ENCODE measurements at regions of chr6 and their contacts with region 1.

Region 1: DNA sequence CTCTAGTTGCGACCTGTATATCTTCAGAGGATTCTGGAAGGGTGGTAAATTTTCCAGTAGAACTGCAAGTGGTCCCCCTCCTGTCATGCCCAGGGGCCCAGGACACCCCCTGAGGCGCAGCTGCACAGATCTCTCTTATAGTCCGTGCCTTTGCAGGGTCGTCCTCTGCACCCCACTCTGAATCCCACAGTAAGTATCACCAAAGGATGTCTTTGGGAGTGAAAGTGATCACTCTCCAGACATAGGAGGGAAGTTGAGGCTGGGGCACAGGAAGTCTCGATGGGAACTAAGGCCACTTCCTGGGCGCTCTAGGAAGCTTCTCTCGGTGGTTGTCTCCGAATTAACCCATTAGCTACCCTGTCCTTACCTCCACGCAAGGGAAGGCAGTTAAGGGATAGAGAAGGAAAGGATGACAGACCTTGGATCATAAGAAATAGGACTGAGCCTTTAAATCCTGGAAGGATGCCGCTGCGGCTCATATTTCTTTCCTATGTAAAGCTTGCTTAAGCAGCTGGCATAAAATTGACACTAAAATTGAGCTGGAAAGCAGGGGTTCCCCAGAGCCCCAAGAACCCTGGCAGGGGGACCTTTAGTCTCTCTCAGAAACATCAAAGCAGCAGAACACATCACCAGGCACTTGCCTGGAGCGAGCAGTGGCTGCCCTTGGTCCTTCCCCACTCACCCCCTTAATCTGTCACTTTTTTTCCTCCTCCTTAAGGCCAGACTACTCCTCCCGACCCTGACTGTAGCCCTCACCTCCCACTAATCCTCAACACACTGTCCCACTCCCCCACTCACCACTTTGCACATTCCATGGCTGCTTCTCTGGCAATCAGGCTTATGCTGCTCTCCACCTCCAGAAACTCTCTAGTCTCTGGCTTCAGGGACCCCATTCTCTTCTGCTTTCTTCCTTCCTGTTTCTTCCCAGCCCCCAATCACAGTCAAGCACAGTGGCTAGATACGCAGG is at the start of gene ZKSCAN4:
- DNase-seq: peak; percentile 72
- H3K4me3 Mint-ChIP-seq: peak within 1 kb of the TSS; percentile 99
- H3K27ac Mint-ChIP-seq: peak within 1 kb of the TSS; percentile 89
- H3K4me1 Mint-ChIP-seq: peaks cover 26% of the 10 kb centered on the region
- H3K27me3 Mint-ChIP-seq: peaks cover 3% of the 10 kb centered on the region
- total RNA-seq, gene ZKSCAN4: 4.8 and 6.0 TPM in 2 replicates

Region 2: DNA sequence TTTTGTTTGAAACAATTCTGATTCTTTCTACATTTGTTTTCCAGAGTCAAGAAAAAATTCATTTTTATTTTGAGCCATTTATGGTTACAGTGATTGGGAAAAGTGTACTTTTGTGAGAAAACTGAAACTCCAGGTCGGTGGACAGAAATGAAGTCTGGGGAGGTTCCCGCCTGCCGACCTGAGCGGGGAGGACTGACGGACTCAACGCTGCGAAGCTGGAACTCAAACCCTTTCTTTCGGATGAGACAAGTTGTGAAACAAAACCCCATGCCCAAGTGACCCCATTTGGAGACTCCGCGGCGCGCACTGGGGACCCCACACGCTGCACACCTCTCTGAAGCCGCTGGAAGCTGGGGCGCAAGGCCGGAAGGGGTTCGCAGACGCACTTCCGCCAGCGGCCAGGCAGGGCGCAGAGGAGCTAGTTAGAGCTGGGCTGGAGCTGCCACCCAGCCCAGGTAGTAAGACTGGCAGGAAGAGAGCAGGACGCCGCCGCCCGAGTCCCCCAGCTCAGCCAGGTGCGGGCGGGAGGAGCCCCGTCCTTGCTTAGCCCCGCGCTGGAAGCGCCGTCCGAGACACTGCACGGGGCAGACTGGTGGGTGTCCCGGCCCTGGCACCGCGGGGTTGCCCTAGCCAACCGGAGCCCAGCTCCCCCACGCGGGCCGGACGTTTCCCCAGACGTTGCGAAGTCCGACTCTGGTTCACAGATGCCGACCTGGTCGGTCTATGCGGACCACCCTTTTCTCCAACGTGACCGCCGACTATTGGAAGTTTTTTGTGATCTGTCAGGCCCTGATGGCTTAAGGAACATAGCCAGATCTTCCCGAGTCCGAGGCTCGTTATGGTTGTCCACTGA is 147.7 kb before region 1 on chr6:
- intact Hi-C with region 1: loop called (anchors 1 kb)
- DNase-seq: peak; percentile 75
- H3K4me3 Mint-ChIP-seq: peak overlapping the region; percentile 83
- H3K27ac Mint-ChIP-seq: peak overlapping the region; percentile 61
- H3K4me1 Mint-ChIP-seq: peaks cover 5% of the 10 kb centered on the region
- H3K27me3 Mint-ChIP-seq: peaks cover 18% of the 10 kb centered on the region

Region 3: GRCh38 chr6:28218271-28219248 is 33.7 kb before region 1 on chr6:
- intact Hi-C with region 1: loop called (anchors 5 kb)
- DNase-seq: no peak
- H3K4me3 Mint-ChIP-seq: peak overlapping the region; percentile 83
- H3K27ac Mint-ChIP-seq: no peak overlapping the region
- H3K4me1 Mint-ChIP-seq: peaks cover 12% of the 10 kb centered on the region
- H3K27me3 Mint-ChIP-seq: peaks cover 70% of the 10 kb centered on the region

Region 4: GRCh38 chr6:28281288-28282064 is 29.2 kb after region 1 on chr6 and contains the start of gene PGBD1:
- intact Hi-C with region 1: loop called (anchors 1 kb)
- DNase-seq: peak; percentile 36
- H3K4me3 Mint-ChIP-seq: peak within 1 kb of the TSS; percentile 86
- H3K27ac Mint-ChIP-seq: no peak within 1 kb of the TSS
- H3K4me1 Mint-ChIP-seq: peaks cover 7% of the 10 kb centered on the region
- H3K27me3 Mint-ChIP-seq: peaks cover 2% of the 10 kb centered on the region
- total RNA-seq, gene PGBD1: 1.7 and 2.0 TPM in 2 replicates